Activated CD4-positive, alpha-beta T cell treated with anti-CD3 and anti-CD28 coated beads, Interleukin-2, amount 10 ng/mL, durations not matched to agents 24 days and 14 days (primary cell): ENCODE measurements at regions of chr6 and their contacts with region 1.

Region 1: DNA sequence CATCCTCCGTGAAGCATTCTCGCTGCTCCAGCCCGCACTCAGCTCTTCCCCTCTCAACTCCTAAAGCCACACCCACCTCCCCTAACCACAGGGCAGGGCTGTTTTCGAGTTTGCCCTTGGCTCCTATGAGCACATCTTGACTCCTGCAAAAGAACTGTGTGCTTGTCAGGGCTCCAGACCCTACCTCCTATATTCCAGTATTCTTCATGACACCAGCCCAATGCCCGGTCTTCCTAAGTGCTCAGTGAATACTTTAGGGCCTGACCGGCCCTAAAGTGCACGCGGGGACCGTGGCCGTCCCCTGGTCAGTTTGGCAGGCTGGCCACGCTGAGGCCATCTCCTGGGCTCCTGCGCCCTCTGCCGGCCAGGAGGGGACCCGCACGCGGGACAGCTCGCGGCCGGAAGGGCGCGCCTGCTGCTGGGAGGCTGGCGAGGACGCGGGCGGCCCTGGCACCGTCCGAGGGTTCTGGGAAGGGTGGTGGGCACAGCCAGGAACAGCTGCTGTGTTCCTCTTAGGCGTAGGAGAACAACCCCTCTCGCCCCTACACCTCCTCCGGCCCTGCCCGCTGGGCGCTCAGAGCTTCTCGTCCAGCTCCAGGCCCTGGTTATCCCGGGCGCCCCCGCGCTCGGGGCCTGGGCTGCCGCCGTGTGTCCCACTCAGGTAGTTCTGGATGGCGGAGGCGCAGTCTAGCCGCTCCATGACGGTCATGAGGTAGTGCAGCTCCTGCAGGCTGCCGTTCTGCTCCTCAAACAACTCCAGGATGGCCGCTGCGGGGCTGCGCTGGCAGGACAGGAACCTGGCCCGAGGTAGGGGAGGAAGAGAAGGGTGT is 11.0 kb downstream of the UNC5CL start:
- DNase-seq: peak; percentile 96
- H3K4me3 Mint-ChIP-seq: peak overlapping the region; percentile 91
- H3K27ac Mint-ChIP-seq: peak overlapping the region; percentile 90
- H3K4me1 Mint-ChIP-seq: peaks cover 25% of the 10 kb centered on the region
- H3K27me3 Mint-ChIP-seq: no peaks in the 10 kb centered on the region

Region 2: DNA sequence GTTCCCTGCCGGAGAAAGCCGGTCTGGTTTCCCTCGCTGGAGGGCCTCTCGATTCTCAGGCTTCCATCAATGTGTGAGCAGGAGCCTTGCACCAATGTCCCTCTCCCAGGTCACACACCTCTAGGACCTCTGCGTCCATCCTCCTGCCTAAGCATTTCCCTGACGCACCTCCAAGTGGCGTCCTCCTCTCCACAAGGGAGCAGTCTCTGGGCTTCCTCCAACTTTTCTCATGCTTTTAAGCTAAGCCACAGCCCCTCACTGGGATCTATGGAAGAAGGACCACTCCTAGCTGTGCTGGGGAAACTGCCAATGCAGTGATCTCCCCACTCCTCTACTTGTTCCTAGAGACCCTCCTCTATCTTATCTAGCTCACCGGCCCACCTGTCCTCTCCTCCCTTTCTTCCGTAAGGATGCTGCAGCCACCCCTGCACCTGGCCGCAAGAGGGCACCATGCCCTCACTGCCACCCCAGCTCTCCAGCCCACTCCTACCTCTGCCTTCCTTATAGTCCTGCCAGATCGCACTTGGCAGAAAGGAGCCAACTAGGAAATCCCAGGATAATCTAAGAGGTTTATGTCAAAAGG is 699.5 kb before region 1 on chr6:
- intact Hi-C with region 1: loop called (anchors 5 kb)
- DNase-seq: peak; percentile 87
- H3K4me3 Mint-ChIP-seq: no peak overlapping the region
- H3K27ac Mint-ChIP-seq: no peak overlapping the region
- H3K4me1 Mint-ChIP-seq: peaks cover 34% of the 10 kb centered on the region
- H3K27me3 Mint-ChIP-seq: peaks cover 19% of the 10 kb centered on the region

Region 3: GRCh38 chr6:41002216-41002615 is 25.8 kb before region 1 on chr6:
- intact Hi-C with region 1: loop called (anchors 1 kb)
- DNase-seq: no peak
- H3K4me3 Mint-ChIP-seq: no peak overlapping the region
- H3K27ac Mint-ChIP-seq: no peak overlapping the region
- H3K4me1 Mint-ChIP-seq: peaks cover 6% of the 10 kb centered on the region
- H3K27me3 Mint-ChIP-seq: peaks cover 53% of the 10 kb centered on the region

Region 4: GRCh38 chr6:41039060-41039998 is 11.3 kb after region 1 on chr6 and contains the start of gene UNC5CL:
- intact Hi-C with region 1: loop called (anchors 1 kb)
- DNase-seq: peak; percentile 90
- H3K4me3 Mint-ChIP-seq: no peak within 1 kb of the TSS
- H3K27ac Mint-ChIP-seq: no peak within 1 kb of the TSS
- H3K4me1 Mint-ChIP-seq: peaks cover 12% of the 10 kb centered on the region
- H3K27me3 Mint-ChIP-seq: no peaks in the 10 kb centered on the region
- total RNA-seq, gene UNC5CL: 0.88 and 1.2 TPM in 2 replicates

Region 5: GRCh38 chr6:41065550-41066026 is 37.6 kb after region 1 on chr6:
- intact Hi-C with region 1: no loop called
- DNase-seq: no peak
- H3K4me3 Mint-ChIP-seq: no peak overlapping the region
- H3K27ac Mint-ChIP-seq: no peak overlapping the region
- H3K4me1 Mint-ChIP-seq: peaks cover 35% of the 10 kb centered on the region
- H3K27me3 Mint-ChIP-seq: no peaks in the 10 kb centered on the region